ENCODE measurements at regions of chr9 and their contacts with region 1.

Region 1: DNA sequence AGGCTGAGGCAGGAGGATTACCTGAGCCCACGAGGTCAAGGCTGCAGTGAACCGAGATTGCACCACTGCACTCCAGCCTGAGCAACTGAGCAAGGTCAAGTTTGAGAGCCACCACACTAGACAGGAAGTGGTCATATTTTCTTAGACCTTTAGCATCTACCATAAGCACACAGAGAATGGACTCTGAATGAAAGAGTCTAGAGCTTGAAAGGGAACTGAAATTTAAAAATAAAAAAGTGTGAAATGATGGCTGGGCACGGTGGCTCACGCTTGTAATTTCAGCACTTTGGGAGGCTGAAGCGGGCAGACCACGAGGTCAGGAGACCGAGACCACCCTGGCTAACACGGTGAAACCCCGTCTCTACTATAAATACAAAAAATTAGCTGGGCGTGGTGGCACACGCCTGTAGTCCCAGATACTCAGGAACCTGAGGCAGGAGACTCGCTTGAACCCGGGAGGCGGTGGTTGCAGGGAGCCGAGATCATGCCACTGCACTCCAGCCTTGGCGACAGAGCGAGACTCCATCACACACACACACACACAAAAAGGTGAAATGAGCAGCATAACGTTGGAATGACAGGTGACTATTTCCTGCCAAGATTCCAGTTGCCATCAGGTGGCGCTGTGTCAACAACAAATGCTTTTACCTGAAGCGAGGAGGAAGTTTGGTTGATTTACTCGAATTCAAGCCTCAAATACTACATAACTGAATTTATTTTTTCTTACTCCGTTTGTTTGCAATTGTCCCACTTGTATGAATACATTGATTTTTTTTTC is 21.3 kb upstream of the AK3 start:
- DNase-seq: peak; percentile 66
- H3K4me3 ChIP-seq: no peak overlapping the region
- H3K27ac ChIP-seq: no peak overlapping the region
- H3K4me1 ChIP-seq: no peaks in the 10 kb centered on the region
- H3K27me3 ChIP-seq: no peaks in the 10 kb centered on the region
- CTCF ChIP-seq: peak; percentile 79 to 87

Region 2: GRCh38 chr9:4630836-4631235 is 131.5 kb before region 1 on chr9:
- CTCF ChIA-PET with region 1: no interaction called
- dilution Hi-C with region 1: no loop called
- in situ Hi-C with region 1: no loop called
- intact Hi-C with region 1: no loop called
- DNase-seq: no peak
- H3K4me3 ChIP-seq: no peak overlapping the region
- H3K27ac ChIP-seq: no peak overlapping the region
- H3K4me1 ChIP-seq: no peaks in the 10 kb centered on the region
- H3K27me3 ChIP-seq: peaks cover 2% of the 10 kb centered on the region
- CTCF ChIP-seq: no peak

Region 3: DNA sequence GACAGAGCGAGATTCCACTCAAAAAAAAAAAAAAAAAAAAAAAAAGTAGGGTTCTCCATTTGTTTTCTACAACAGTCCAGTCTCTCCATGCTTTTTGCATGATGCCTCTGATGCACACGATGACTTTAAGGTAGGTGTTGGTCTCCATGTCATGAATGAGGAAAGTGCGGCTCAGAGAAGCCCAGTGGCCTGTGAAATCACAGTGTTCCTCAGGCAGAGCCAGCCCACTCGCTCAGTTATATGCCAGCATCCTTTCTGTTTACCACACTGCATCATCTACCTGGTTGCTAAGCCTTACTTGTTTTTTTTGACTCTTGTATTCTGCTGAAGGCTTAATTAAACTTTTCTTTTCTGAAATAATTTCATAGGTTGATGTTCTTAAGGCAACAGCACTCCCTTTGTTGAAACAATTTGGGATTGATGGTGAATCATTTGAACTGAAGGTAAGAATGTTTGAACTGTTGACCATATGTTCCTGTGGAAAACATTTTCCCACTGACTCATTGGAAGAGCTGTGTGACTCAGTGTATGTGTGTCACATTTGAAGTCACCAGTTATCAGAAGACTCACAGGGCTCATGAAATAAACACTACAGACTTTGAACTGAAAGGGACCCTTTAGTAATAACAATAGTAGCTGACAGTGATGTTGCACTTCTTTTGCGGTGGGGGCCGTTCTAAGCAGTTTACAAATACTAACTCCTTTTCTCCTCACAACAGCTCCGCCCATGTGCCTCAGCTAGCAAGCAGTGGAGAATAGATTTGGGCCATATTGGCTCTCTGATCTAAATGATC is 70.7 kb after region 1 on chr9:
- CTCF ChIA-PET with region 1: no interaction called
- dilution Hi-C with region 1: no loop called
- in situ Hi-C with region 1: no loop called
- intact Hi-C with region 1: loop called (anchors 10 kb)
- DNase-seq: peak; percentile 99
- H3K4me3 ChIP-seq: no peak overlapping the region
- H3K27ac ChIP-seq: peak overlapping the region; percentile 84
- H3K4me1 ChIP-seq: peaks cover 40% of the 10 kb centered on the region
- H3K27me3 ChIP-seq: no peaks in the 10 kb centered on the region
- CTCF ChIP-seq: no peak

Region 4: GRCh38 chr9:5178126-5178805 is 416.0 kb after region 1 on chr9:
- CTCF ChIA-PET with region 1: no interaction called
- dilution Hi-C with region 1: no loop called
- in situ Hi-C with region 1: loop called in 1 of 2 experiments (anchors 25 kb)
- intact Hi-C with region 1: no loop called
- DNase-seq: no peak
- H3K4me3 ChIP-seq: no peak overlapping the region
- H3K27ac ChIP-seq: no peak overlapping the region
- H3K4me1 ChIP-seq: no peaks in the 10 kb centered on the region
- H3K27me3 ChIP-seq: no peaks in the 10 kb centered on the region
- CTCF ChIP-seq: no peak

Region 5: GRCh38 chr9:5437254-5438216 is 675.2 kb after region 1 on chr9 and contains the start of gene PLGRKT:
- CTCF ChIA-PET with region 1: no interaction called
- dilution Hi-C with region 1: no loop called
- in situ Hi-C with region 1: loop called in 1 of 2 experiments (anchors 25 kb)
- intact Hi-C with region 1: loop called (anchors 5 kb)
- DNase-seq: peak; percentile 89
- H3K4me3 ChIP-seq: peak within 1 kb of the TSS; percentile 67 to 87 (median 75)
- H3K27ac ChIP-seq: peak within 1 kb of the TSS; percentile 82
- H3K4me1 ChIP-seq: peaks cover 30% of the 10 kb centered on the region
- H3K27me3 ChIP-seq: no peaks in the 10 kb centered on the region
- CTCF ChIP-seq: peak in 1 of 2 donors; percentile 26
- total RNA-seq, gene PLGRKT: 13.3 to 31.2 TPM

Region 6: DNA sequence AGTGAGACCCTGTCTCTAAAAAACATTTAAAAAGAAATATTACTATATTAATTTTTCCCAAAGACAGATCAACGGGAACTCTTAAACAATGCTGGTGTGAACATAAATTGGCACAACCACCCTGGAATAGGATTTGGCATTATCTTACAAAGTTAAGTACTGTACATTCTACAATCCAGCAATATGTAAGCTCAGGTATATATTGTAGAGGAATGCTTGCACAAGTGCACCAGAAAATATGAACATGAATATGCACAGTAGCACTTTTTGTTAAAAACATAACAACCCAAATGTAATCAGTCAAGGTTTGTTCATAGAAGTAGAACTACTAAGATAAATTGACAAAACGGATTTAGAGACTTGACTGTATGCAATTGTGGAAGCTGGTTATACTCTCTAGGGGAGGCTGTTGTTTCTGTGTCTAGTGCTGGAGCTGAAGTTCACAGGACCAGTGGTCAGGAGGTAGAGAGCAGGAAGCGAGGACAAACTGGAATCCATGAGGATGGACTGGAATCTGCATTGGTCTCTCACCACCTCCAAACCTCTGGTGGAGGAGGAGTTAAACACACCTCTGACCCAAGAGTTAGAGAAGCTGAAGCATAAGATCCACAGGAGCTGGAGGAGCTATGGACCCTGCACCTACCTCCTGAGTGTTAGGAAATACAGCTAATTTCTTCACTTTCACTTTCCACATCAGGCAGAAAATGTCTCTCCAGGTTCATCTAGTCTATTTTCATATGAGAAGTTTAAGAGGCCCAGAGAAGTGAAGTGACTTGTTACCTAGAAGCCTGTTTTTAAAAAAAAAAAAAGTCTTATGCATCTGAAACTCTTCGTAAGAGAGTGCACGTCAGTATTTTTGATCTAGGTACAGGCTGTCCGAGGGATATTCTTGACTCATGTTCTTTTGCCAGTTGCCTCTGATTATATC is 846.3 kb after region 1 on chr9:
- CTCF ChIA-PET with region 1: no interaction called
- dilution Hi-C with region 1: no loop called
- in situ Hi-C with region 1: no loop called
- intact Hi-C with region 1: loop called (anchors 5 kb)
- DNase-seq: peak; percentile 46
- H3K4me3 ChIP-seq: peak overlapping the region; percentile 18 to 36 (median 25)
- H3K27ac ChIP-seq: no peak overlapping the region
- H3K4me1 ChIP-seq: peaks cover 3% of the 10 kb centered on the region
- H3K27me3 ChIP-seq: no peaks in the 10 kb centered on the region
- CTCF ChIP-seq: no peak

Measured in mammary epithelial cell (primary cell).